ENCODE measurements at regions of chr9 and their contacts with region 1.

Region 1: DNA sequence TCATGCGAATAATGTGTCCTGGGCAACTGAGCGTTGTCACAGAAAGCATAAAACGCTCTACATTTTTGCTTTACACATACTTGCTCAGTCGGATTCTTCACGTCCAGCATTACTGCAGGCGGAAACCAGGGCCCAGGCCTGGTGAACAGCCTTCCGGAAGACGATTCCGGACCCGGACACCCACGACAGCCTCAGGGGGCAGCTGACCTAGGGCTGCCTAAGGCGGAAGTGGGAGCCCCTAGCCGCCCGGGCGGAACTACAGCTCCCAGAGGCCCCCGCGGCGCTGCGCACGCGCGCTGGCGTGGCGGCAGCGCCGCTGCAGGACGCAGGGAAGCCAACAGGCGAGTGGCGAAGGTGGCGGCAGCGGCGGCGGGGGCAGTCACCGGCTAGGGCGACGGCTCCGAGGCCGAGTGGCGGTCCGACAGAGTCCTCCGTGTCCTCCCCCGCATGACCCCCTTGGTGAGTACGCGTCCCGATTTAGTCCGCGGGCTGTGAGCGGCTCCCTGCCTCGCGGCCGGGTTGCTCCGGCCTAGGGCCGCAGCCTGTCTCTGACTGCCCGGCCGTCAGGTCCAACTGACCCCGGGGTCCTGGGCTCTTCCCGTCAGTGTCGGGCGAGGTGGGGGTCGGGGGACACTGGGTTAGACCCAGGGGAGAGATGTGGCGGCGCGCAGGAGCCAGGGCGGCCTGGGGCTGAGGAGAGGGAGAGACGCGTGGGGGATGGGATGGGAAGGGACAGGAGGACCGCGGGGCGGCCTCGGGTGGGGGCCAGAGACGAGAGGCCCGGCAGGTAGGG is at the start of gene GAPVD1:
- DNase-seq: peak; percentile 95
- total RNA-seq, gene GAPVD1: 31.1 TPM

Region 2: DNA sequence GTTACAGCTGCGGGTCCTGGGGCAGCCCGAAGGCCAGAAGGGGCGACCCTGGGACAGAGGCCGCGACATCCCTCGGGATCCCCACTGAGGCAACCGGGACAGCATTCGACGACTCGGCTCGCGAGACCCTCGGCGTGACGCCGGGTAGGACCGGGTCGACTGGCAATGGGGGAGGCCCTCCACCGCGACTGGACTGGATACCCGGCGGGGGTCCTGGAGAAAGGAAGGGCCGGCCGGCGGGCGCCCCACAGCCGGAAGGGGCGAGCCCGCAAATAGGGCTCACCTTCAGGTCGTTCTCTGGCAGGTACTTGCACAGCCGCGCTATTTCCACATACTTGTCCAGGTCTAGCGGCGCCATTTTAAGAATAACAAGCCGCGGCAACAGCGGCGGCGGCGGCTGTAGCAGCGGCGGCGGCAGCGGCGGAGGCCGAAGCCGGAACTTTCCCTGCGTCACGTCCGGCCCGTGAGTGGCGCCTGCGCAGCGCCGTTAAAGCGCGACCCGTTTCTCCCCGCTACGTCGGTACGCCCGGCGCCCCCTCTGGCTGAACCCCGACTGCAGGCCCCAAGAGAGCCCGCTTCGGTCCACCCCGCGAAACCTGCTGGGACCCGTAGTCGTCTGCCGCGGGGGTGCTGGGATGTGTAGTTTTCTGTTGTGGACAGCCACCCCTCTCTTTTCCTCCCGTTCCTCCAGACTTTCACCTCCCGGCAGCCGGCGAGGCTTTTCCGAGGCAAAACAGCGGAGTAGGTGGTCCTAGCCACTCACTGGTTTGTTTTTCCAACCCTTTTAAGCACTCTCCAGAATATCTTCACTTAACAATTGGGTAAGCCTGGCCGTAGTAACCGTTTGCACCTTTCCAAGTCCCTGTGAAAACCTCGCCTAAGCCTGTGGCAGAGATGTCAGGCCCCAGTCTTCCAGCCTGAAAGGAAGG is 72.1 kb before region 1 on chr9 and contains the start of gene PPP6C:
- intact Hi-C with region 1: loop called (anchors 5 kb)
- DNase-seq: peak; percentile 98
- total RNA-seq, gene PPP6C: 32.5 TPM

Region 3: GRCh38 chr9:125241000-125241862 is 20.5 kb before region 1 on chr9 and contains the start of gene HSPA5:
- intact Hi-C with region 1: loop called (anchors 1 kb)
- DNase-seq: peak; percentile 99
- total RNA-seq, gene HSPA5: 284 TPM

Measured in cardiac septum (tissue), 1 donor.